Activated CD4-positive, alpha-beta T cell treated with anti-CD3 and anti-CD28 coated beads for 36 hours (primary cell): ENCODE measurements at regions of chr1 and their contacts with region 1.

Region 1: DNA sequence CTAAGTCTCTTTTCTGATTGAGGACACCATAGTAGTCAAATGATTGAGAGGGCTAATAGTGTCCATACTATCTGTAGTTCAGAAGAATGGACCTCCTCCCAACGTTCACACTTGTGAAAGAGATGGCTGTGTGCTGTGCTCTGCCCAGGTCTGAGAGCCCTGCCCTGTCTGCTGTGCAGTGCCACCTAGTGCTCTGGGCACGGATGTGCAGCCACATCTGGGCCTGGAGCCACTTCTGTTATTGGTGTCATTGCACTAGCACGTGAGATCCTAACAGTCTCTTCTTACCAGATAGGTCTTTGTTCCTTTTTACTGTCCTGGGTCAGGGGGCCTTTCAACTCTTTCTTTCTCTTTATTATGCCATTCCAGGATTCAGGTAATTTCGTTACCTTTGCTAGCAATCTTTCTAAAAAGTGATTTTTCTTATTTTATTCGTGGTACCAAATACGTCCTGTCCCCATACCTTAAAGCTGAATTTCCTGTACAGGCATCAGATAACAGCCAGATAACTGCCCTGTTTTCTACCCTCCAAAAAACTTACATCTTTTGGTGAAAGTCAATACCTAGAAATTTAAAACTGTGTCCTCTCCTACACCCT is 21.7 kb downstream of the INTS3 start:
- DNase-seq: peak; percentile 89
- ATAC-seq: peak; percentile 100
- H3K4me3 Mint-ChIP-seq: no peak overlapping the region
- H3K27ac Mint-ChIP-seq: no peak overlapping the region
- H3K4me1 Mint-ChIP-seq: peaks cover 5% of the 10 kb centered on the region
- H3K27me3 Mint-ChIP-seq: no peaks in the 10 kb centered on the region

Region 2: GRCh38 chr1:153677718-153678505 is 71.6 kb before region 1 on chr1:
- CTCF ChIA-PET with region 1: interaction called, 21 read pairs
- POLR2A ChIA-PET with region 1: no interaction called
- intact Hi-C with region 1: loop called (anchors 1 kb)
- DNase-seq: peak; percentile 74
- ATAC-seq: peak; percentile 66
- H3K4me3 Mint-ChIP-seq: peak overlapping the region; percentile 64
- H3K27ac Mint-ChIP-seq: no peak overlapping the region
- H3K4me1 Mint-ChIP-seq: peaks cover 21% of the 10 kb centered on the region
- H3K27me3 Mint-ChIP-seq: peaks cover 43% of the 10 kb centered on the region

Region 3: GRCh38 chr1:153698932-153699515 is 50.5 kb before region 1 on chr1:
- CTCF ChIA-PET with region 1: no interaction called
- POLR2A ChIA-PET with region 1: interaction called, 13 read pairs
- intact Hi-C with region 1: no loop called
- DNase-seq: no peak
- ATAC-seq: no peak
- H3K4me3 Mint-ChIP-seq: no peak overlapping the region
- H3K27ac Mint-ChIP-seq: no peak overlapping the region
- H3K4me1 Mint-ChIP-seq: no peaks in the 10 kb centered on the region
- H3K27me3 Mint-ChIP-seq: peaks cover 3% of the 10 kb centered on the region